ENCODE measurements at regions of chr5 and their contacts with region 1.

Region 1: GRCh38 chr5:112921833-112922817 is at the start of gene REEP5:
- DNase-seq: peak; percentile 48
- ATAC-seq: peak; percentile 85
- H3K4me3 ChIP-seq: peak within 1 kb of the TSS; percentile 93 to 95
- H3K27ac ChIP-seq: peak within 1 kb of the TSS; percentile 93
- H3K4me1 ChIP-seq: peaks cover 8 to 20% of the 10 kb centered on the region in 2 experiments; a peak in 3 of 4 replicates
- H3K27me3 ChIP-seq: no peaks in the 10 kb centered on the region
- CTCF ChIP-seq: peak; percentile 33 to 69 (median 68); a peak in 5 of 6 replicates
- POLR2A ChIP-seq: peak; percentile 84
- RAD21 ChIP-seq: peak; percentile 64
- total RNA-seq, gene REEP5: 71.7 TPM

Region 2: DNA sequence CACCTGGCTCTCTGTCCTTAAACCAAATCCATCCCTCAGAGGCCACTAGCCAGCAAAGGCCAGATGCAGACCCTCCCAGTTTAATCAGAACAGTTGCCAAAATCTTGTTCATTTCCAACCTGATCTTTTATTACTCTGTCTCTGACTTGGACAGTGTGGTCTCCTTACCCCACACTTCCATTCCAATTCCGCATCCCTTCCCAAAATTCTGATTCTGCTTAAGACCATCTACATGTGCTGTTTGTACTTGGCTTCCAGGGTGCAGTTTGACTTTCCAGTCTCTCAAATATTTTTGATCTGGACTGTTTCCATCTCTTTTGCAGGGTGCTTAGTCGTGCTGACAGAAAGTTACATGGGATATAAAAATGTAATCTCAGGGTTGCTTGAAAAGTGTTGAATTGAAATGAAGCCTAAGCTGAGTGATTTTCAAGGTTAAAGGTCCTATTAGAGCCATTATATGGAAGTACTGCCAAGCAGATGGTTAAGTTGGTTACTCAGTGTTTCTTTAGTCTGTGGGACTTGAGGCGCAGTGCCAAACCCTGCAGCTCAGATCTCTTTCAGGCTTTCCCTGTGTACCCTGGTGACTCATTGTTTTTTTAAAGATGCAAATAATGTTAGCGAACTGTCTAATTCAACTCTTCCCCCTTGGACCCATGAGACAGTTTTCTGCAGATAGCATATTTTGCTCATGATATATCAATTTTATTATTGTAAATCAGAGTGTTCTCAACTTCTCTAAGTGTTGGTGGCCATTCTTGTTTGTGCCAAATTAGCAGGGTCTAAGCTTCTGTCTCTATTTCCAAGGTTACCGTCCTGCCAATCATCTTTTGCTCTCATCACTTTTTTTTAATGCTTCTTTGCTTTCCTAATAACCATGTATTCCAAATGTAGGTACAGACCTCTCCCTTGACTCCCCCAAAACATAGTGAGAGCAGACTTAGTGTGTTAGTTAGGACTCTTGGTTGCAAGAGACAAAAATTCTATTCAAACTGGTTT is 36.3 kb after region 1 on chr5:
- CTCF ChIA-PET with region 1: interaction called, 3 read pairs
- POLR2A ChIA-PET with region 1: no interaction called
- RAD21 ChIA-PET with region 1: interaction called in 1 of 2 experiments, 5 read pairs
- intact Hi-C with region 1: loop called (anchors 2 kb)
- DNase-seq: peak; percentile 51
- ATAC-seq: peak; percentile 78
- H3K4me3 ChIP-seq: no peak overlapping the region
- H3K27ac ChIP-seq: no peak overlapping the region; the same call in 1 of the 2 replicates
- H3K4me1 ChIP-seq: peaks cover 28 to 37% of the 10 kb centered on the region in 2 experiments
- H3K27me3 ChIP-seq: no peaks in the 10 kb centered on the region
- CTCF ChIP-seq: no peak
- POLR2A ChIP-seq: no peak
- RAD21 ChIP-seq: no peak

Region 3: GRCh38 chr5:112976432-112977309 is 54.5 kb after region 1 on chr5 and contains the start of gene DCP2:
- CTCF ChIA-PET with region 1: interaction called, 4 read pairs
- POLR2A ChIA-PET with region 1: no interaction called
- RAD21 ChIA-PET with region 1: no interaction called
- intact Hi-C with region 1: loop called (anchors 5 kb)
- DNase-seq: peak; percentile 99
- ATAC-seq: peak; percentile 94
- H3K4me3 ChIP-seq: peak within 1 kb of the TSS; percentile 81 to 91
- H3K27ac ChIP-seq: peak within 1 kb of the TSS; percentile 71
- H3K4me1 ChIP-seq: peaks cover 4 to 18% of the 10 kb centered on the region in 2 experiments; a peak in 3 of 4 replicates
- H3K27me3 ChIP-seq: no peaks in the 10 kb centered on the region
- CTCF ChIP-seq: no peak
- POLR2A ChIP-seq: peak; percentile 88
- RAD21 ChIP-seq: no peak
- total RNA-seq, gene DCP2: 57.1 TPM

Region 4: DNA sequence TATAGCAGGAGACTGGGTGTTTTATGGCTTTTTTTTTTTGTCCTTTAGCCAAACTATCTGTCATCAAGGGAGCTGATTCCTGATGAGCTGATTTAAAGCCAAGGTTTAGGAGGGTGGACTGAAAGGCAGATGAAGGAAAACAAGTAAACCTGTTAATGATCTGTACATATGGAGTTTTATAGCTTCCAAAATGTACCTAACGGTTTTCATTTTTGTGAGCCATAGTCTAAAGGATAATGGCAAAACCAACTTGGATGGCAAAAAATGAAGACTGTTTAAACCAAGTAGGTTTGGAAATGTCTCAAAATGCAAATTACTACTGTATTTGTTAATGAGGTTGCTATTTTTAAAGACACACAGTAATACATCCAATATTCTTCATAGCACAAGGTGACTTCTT is 872.9 kb after region 1 on chr5:
- CTCF ChIA-PET with region 1: no interaction called
- POLR2A ChIA-PET with region 1: no interaction called
- RAD21 ChIA-PET with region 1: no interaction called
- intact Hi-C with region 1: no loop called
- DNase-seq: no peak
- ATAC-seq: no peak
- H3K4me3 ChIP-seq: no peak overlapping the region
- H3K27ac ChIP-seq: no peak overlapping the region
- H3K4me1 ChIP-seq: no peaks in the 10 kb centered on the region
- H3K27me3 ChIP-seq: peaks cover 25% of the 10 kb centered on the region
- CTCF ChIP-seq: no peak
- POLR2A ChIP-seq: no peak
- RAD21 ChIP-seq: no peak

Measured in HCT116 (cell line).